ENCODE measurements at regions of chr6 and their contacts with region 1.

Region 1: GRCh38 chr6:79544939-79545450 is 7.8 kb upstream of the LCA5 start:
- DNase-seq: peak; percentile 99
- ATAC-seq: peak; percentile 98
- H3K4me3 ChIP-seq: no peak overlapping the region
- H3K27ac ChIP-seq: peak overlapping the region; percentile 30; the same call in 1 of the 2 replicates
- H3K4me1 ChIP-seq: peaks cover 8% of the 10 kb centered on the region
- H3K27me3 ChIP-seq: no peaks in the 10 kb centered on the region
- CTCF ChIP-seq: peak; percentile 63
- POLR2A ChIP-seq: 0 out of 2 replicates have a peak, but pooled peaks have one; percentile 42
- RAD21 ChIP-seq: peak; percentile 59

Region 2: DNA sequence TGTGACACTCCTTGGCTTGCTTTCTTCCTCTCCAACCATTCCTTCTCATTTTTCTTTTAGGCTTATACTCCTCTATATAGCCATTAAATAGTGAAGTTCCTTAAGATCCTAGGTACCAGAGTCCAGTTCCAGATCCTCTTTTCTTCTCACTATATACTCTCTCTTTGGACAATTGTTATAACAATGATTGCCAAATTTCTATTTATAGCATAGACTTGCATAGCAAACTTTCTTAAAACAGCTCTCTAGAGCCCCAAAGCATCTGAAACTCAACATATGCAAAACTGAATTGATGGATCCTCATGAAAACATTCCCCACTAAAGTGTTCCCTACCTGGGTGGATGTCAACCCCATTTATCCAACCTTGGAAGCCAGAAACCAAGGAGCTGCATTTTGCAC is 480.4 kb before region 1 on chr6:
- CTCF ChIA-PET with region 1: no interaction called
- POLR2A ChIA-PET with region 1: no interaction called
- dilution Hi-C with region 1: no loop called
- in situ Hi-C with region 1: loop called (anchors 10 kb)
- intact Hi-C with region 1: no loop called
- DNase-seq: no peak
- ATAC-seq: no peak
- H3K4me3 ChIP-seq: no peak overlapping the region
- H3K27ac ChIP-seq: no peak overlapping the region
- H3K4me1 ChIP-seq: peaks cover 7% of the 10 kb centered on the region
- H3K27me3 ChIP-seq: no peaks in the 10 kb centered on the region
- CTCF ChIP-seq: no peak
- POLR2A ChIP-seq: no peak
- RAD21 ChIP-seq: no peak

Region 3: DNA sequence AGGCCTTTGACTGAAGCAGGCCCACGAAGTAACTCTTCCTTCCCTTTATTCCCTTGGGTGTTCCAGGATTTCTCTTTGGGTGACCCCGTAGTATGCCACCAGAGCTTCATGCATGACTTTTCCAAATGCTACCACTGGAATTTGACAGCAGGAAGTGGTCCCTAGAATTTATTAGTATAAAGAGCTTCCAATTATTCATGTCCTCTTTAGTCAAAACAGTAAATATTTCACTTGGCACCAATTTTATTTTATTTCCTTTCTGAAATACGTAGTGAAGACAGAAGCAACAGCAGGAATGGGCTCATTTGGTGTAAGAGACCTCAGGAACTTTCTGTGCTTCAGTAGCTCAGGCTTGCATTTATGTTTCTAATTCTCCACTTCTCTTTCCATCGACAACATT is 159.1 kb before region 1 on chr6:
- CTCF ChIA-PET with region 1: no interaction called
- POLR2A ChIA-PET with region 1: no interaction called
- dilution Hi-C with region 1: no loop called
- in situ Hi-C with region 1: no loop called
- intact Hi-C with region 1: no loop called
- DNase-seq: no peak
- ATAC-seq: no peak
- H3K4me3 ChIP-seq: no peak overlapping the region
- H3K27ac ChIP-seq: no peak overlapping the region
- H3K4me1 ChIP-seq: no peaks in the 10 kb centered on the region
- H3K27me3 ChIP-seq: no peaks in the 10 kb centered on the region
- CTCF ChIP-seq: no peak
- POLR2A ChIP-seq: no peak
- RAD21 ChIP-seq: no peak